OCI-LY7 (cell line): ENCODE measurements at regions of chr1 and their contacts with region 1.

Region 1: GRCh38 chr1:116139592-116140134 is 28.5 kb downstream of the MAB21L3 start:
- DNase-seq: no peak
- H3K4me3 ChIP-seq: no peak overlapping the region
- H3K27ac ChIP-seq: no peak overlapping the region
- H3K4me1 ChIP-seq: peaks cover 9% of the 10 kb centered on the region
- CTCF ChIP-seq: no peak

Region 2: DNA sequence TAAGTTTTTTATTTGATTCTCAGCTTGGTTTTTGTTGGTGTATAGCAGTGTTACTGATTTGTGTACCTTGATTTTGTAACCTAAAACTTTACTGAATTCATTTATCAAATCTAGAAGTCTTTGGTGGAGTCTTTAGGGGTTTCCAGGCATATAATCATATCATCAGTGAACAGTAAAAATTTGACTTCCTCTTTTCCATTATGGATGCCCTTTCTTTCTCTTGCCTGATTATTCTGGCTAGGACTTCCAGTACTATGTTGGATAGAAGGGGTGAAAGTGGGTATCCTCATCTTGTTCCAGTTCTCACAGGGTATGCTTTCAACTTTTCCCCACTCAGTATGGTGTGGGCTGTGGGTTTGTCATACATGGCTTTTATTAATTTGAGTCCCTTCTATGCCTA is 52.0 kb before region 1 on chr1:
- CTCF ChIA-PET with region 1: no interaction called
- POLR2A ChIA-PET with region 1: no interaction called
- intact Hi-C with region 1: no loop called
- DNase-seq: no peak
- H3K4me3 ChIP-seq: no peak overlapping the region
- H3K27ac ChIP-seq: no peak overlapping the region
- H3K4me1 ChIP-seq: no peaks in the 10 kb centered on the region
- CTCF ChIP-seq: no peak

Region 3: GRCh38 chr1:116226017-116226416 is 86.4 kb after region 1 on chr1:
- CTCF ChIA-PET with region 1: no interaction called
- POLR2A ChIA-PET with region 1: no interaction called
- intact Hi-C with region 1: loop called (anchors 5 kb)
- DNase-seq: peak; percentile 61
- H3K4me3 ChIP-seq: peak overlapping the region; percentile 15
- H3K27ac ChIP-seq: peak overlapping the region; percentile 45
- H3K4me1 ChIP-seq: peaks cover 72% of the 10 kb centered on the region
- CTCF ChIP-seq: no peak

Region 4: DNA sequence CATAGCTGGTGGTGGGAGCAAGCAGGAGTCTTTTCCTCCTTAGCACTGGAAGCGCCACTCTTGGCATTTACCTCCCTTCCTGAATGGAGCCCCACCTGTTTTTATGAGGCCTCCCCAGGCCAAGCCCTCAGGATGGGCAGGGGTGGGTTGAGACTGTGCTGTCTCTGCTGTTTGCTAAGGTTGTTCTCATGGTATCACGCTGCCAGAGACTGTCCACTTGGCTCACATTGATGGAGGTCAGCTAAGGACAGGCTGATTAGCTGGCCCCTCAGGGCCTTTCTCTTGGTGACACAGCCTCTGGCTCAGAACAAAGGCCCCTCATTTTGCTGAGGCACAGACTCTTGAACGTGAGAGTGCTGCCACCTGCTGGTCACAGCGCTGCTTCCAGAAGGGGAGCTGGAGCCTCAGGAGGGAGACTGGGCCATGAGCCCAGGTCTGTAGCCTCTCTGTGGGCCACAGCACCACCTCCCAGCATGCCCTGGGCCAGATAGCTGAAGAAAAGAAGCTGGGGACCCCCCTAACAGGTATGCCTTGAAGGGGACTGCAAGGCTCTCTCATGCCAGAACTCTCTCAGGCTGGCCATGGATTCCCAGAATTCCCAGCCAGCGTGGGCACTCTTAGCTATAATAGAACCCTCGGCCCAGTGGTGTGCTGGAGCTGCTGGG is 345.5 kb after region 1 on chr1:
- CTCF ChIA-PET with region 1: interaction called, 50 read pairs
- POLR2A ChIA-PET with region 1: interaction called, 4 read pairs
- intact Hi-C with region 1: loop called (anchors 1 kb)
- DNase-seq: peak; percentile 88
- H3K4me3 ChIP-seq: no peak overlapping the region
- H3K27ac ChIP-seq: no peak overlapping the region
- H3K4me1 ChIP-seq: no peaks in the 10 kb centered on the region
- CTCF ChIP-seq: peak; percentile 95

Region 5: GRCh38 chr1:116498789-116499628 is 359.3 kb after region 1 on chr1:
- CTCF ChIA-PET with region 1: interaction called, 26 read pairs
- POLR2A ChIA-PET with region 1: no interaction called
- intact Hi-C with region 1: loop called (anchors 1 kb)
- DNase-seq: peak; percentile 72
- H3K4me3 ChIP-seq: no peak overlapping the region
- H3K27ac ChIP-seq: no peak overlapping the region
- H3K4me1 ChIP-seq: no peaks in the 10 kb centered on the region
- CTCF ChIP-seq: peak; percentile 87